ENCODE measurements at regions of chr14 and their contacts with region 1.

Region 1: GRCh38 chr14:98633380-98633779 is 638.6 kb downstream of the BCL11B start:
- DNase-seq: peak; percentile 33 to 92 (median 78)
- H3K4me3 ChIP-seq: peak overlapping the region in 37 of 59 donors; percentile 2 to 54 (median 30)
- H3K27ac ChIP-seq: peak overlapping the region in 16 of 59 donors; percentile 2 to 77 (median 58)
- H3K27me3 ChIP-seq: peaks cover 0 to 11% (median 0%) of the 10 kb centered on the region in 45 donors
- CTCF ChIP-seq: peak in 9 of 56 donors; percentile 5 to 32 (median 20)

Region 2: DNA sequence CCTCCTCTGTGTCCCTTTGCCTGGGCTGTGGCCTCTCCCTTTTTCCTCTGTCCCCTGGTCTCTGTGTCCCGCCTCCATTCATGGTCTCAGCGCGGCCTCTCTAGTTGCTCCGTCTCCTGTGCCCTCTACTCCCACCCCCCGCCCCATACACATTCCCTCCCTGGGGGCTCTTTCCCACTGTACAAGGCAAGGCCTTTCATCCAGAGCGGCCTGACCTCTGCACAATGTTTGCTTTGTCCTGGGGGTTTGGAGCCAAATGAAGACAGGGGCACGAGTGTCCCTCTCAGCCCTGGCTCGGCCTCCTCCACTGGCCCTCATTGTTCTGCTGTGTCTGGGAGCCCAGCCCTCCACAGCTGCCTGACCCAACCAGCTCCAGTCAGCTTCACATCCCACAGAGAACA is 40.0 kb before region 1 on chr14:
- intact Hi-C with region 1: loop called (anchors 1 to 5 kb)
- DNase-seq: peak; percentile 25 to 93 (median 89)
- H3K4me3 ChIP-seq: peak overlapping the region in 13 of 59 donors; percentile 0 to 53 (median 25)
- H3K27ac ChIP-seq: peak overlapping the region in 29 of 59 donors; percentile 5 to 84 (median 63)
- H3K27me3 ChIP-seq: peaks cover 0 to 7% (median 0%) of the 10 kb centered on the region in 45 donors
- CTCF ChIP-seq: peak in 9 of 56 donors; percentile 7 to 31 (median 17)

Region 3: GRCh38 chr14:99595034-99595433 is 961.7 kb after region 1 on chr14:
- intact Hi-C with region 1: no loop called
- DNase-seq: no peak
- H3K4me3 ChIP-seq: no peak overlapping the region
- H3K27ac ChIP-seq: peak overlapping the region in 1 of 59 donors; percentile 75
- H3K27me3 ChIP-seq: no peaks in the 10 kb centered on the region
- CTCF ChIP-seq: no peak

Measured in dorsolateral prefrontal cortex (tissue), 120 donors.